ENCODE measurements at regions of chr15 and their contacts with region 1.

Region 1: GRCh38 chr15:101258238-101259144 is 6.6 kb upstream of the CHSY1 start:
- DNase-seq: no peak
- H3K4me3 ChIP-seq: no peak overlapping the region
- H3K27ac ChIP-seq: no peak overlapping the region
- H3K4me1 ChIP-seq: peaks cover 0 to 13% (median 0%) of the 10 kb centered on the region in 3 donors
- H3K27me3 ChIP-seq: no peaks in the 10 kb centered on the region
- CTCF ChIP-seq: peak; percentile 74 to 93 (median 87)
- POLR2A ChIP-seq: no peak

Region 2: GRCh38 chr15:101014921-101015841 is 243.3 kb before region 1 on chr15:
- intact Hi-C with region 1: loop called (anchors 5 kb)
- DNase-seq: no peak
- H3K4me3 ChIP-seq: no peak overlapping the region
- H3K27ac ChIP-seq: no peak overlapping the region
- H3K4me1 ChIP-seq: peaks cover 0 to 26% (median 4%) of the 10 kb centered on the region in 3 donors
- H3K27me3 ChIP-seq: no peaks in the 10 kb centered on the region
- CTCF ChIP-seq: peak; percentile 59 to 89 (median 80)
- POLR2A ChIP-seq: no peak

Region 3: GRCh38 chr15:101088788-101089583 is 169.5 kb before region 1 on chr15:
- intact Hi-C with region 1: loop called (anchors 2 kb)
- DNase-seq: no peak
- H3K4me3 ChIP-seq: peak overlapping the region; percentile 4 to 53 (median 30)
- H3K27ac ChIP-seq: peak overlapping the region in 1 of 4 donors; percentile 21
- H3K4me1 ChIP-seq: peaks cover 10 to 40% (median 10%) of the 10 kb centered on the region in 3 donors
- H3K27me3 ChIP-seq: no peaks in the 10 kb centered on the region
- CTCF ChIP-seq: peak; percentile 99 to 100 (median 99)
- POLR2A ChIP-seq: no peak

Measured in esophagus squamous epithelium (tissue), 5 donors.